ENCODE measurements at regions of chr19 and their contacts with region 1.

Region 1: DNA sequence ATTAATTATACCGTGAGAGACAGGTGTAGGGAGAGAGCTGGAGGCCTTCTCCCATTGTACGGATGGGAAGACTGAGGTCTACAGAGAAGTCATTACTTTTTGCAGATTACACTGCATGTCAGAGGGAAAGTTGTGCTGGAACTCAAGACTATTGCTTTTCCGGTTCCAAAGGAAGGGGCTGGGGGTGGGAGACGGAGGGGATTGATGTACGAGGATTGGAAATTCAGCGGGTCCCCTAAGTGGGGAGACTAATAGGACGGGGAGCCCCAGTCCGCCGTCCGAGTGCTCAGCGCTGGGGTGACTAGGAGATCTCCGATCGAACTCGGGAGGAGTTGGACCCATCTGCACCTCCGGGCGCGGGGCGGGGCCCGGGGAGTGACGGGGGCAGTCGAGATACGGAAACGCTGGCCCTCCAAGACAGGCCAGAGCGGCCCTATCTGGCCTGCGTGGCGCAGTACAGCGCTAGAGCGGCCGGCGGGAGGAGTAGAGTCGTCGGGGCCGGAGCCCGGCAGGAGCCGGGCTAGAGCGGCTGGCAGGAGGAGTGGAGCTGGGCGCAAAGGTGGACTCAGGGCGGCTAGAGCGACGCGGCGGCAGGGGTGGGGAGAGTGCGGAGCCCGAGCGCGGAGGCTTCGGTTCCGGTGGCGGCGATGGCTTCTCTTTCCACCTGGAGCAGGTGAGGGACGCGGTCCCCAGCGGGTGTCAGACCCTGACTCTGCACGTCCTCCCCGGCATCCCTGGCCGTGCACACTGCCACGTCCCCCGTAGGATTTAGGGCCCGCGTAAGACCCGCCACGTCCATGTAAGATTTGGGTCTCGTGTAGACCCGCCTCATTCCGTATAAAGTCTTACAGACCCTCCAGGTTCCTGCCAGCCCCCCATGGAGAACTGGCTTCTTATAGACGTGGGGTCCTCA is 1.1 kb downstream of the ARHGEF1 start:
- DNase-seq: peak; percentile 93 to 98 (median 96)
- ATAC-seq: peak; percentile 97 to 99 (median 98)
- H3K4me3 ChIP-seq: peak overlapping the region; percentile 45 to 99 (median 92)
- H3K27ac ChIP-seq: peak overlapping the region; percentile 83 to 98 (median 93)
- H3K4me1 ChIP-seq: peaks cover 0 to 51% (median 32%) of the 10 kb centered on the region in 12 donors
- H3K27me3 ChIP-seq: no peaks in the 10 kb centered on the region
- CTCF ChIP-seq: peak in 4 of 12 donors; percentile 13 to 43 (median 38)
- POLR2A ChIP-seq: peak in 1 of 2 donors; percentile 63

Region 2: GRCh38 chr19:41859618-41860418 is 24.3 kb before region 1 on chr19 and contains the start of gene RPS19:
- intact Hi-C with region 1: loop called in 2 of 10 experiments (anchors 1 kb)
- DNase-seq: peak; percentile 98 to 99 (median 99)
- ATAC-seq: peak; percentile 95 to 97 (median 96)
- H3K4me3 ChIP-seq: peak within 1 kb of the TSS; percentile 74 to 94 (median 86)
- H3K27ac ChIP-seq: peak within 1 kb of the TSS; percentile 91 to 99 (median 97)
- H3K4me1 ChIP-seq: peaks cover 6 to 43% (median 30%) of the 10 kb centered on the region in 12 donors
- H3K27me3 ChIP-seq: no peaks in the 10 kb centered on the region
- CTCF ChIP-seq: peak; percentile 44 to 81 (median 66)
- POLR2A ChIP-seq: peak; percentile 31 to 78
- total RNA-seq, gene RPS19: 161 to 1,072 (median 585) TPM

Region 3: DNA sequence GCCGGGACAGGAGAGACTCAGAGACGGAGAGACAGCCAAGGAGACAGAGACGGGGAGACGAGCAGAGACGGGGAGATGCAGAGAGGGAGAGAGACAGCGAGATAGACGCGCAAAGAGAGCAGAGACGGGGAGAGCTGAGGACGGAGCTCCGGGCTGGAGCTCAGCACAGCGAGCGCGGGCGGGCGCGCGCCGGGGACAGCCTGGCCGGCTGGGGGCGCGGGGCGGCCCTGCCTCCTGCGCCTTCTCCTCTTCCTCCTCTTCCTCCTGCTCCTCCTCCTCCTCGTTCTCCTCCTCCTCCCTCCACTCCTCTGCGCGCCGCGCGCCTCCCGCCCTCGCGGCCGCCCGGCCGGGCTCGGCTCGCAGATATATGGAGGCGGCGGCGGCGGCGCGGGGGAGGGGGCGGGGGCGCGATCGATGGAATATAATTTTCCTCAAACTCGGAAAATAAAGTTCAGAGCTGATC is 44.2 kb after region 1 on chr19 and contains the start of gene ERFL:
- intact Hi-C with region 1: loop called in 6 of 10 experiments (anchors 1 to 5 kb)
- DNase-seq: no peak
- ATAC-seq: peak in 1 of 4 donors; percentile 14
- H3K4me3 ChIP-seq: peak within 1 kb of the TSS; percentile 18 to 57 (median 46)
- H3K27ac ChIP-seq: no peak within 1 kb of the TSS
- H3K4me1 ChIP-seq: peaks cover 0 to 23% (median 15%) of the 10 kb centered on the region in 12 donors
- H3K27me3 ChIP-seq: peaks cover 61 to 97% (median 93%) of the 10 kb centered on the region in 9 donors
- CTCF ChIP-seq: peak in 1 of 12 donors; percentile 3
- POLR2A ChIP-seq: no peak
- total RNA-seq, gene ERFL: 0.13 TPM in 1 of 9 donors, not detected in the others

Region 4: DNA sequence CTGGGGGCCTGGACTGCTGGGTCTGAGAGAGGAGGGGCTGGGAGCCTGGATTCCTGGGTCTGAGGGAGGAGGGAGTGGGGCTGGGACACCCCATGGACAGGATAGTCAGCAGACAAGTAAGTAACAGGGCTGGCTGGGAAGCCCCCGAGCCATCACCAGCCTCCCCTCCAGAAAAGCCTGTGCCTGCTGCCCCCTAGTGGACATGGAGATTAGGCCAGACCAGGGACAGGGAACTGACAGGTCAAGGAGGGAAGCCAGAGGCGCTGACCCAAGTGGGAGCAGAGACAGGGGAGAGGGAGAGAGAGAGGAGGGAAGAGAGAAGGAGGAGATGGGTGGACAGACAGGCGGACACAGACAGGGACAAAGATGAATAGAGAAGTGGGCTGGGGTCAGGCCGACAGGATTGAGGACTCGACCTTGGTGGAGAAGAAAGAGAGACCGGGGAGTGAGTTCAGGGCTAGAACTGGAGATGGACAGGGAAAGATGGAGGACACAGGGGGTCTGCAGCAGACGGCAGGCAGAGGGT is 50.8 kb after region 1 on chr19:
- intact Hi-C with region 1: loop called in 4 of 10 experiments (anchors 5 kb)
- DNase-seq: peak; percentile 58 to 78 (median 70)
- ATAC-seq: peak in 3 of 4 donors; percentile 62 to 75 (median 74)
- H3K4me3 ChIP-seq: no peak overlapping the region
- H3K27ac ChIP-seq: no peak overlapping the region
- H3K4me1 ChIP-seq: peaks cover 0 to 6% (median 0%) of the 10 kb centered on the region in 12 donors
- H3K27me3 ChIP-seq: peaks cover 25 to 77% (median 55%) of the 10 kb centered on the region in 9 donors
- CTCF ChIP-seq: peak; percentile 66 to 85 (median 79)
- POLR2A ChIP-seq: no peak

Region 5: DNA sequence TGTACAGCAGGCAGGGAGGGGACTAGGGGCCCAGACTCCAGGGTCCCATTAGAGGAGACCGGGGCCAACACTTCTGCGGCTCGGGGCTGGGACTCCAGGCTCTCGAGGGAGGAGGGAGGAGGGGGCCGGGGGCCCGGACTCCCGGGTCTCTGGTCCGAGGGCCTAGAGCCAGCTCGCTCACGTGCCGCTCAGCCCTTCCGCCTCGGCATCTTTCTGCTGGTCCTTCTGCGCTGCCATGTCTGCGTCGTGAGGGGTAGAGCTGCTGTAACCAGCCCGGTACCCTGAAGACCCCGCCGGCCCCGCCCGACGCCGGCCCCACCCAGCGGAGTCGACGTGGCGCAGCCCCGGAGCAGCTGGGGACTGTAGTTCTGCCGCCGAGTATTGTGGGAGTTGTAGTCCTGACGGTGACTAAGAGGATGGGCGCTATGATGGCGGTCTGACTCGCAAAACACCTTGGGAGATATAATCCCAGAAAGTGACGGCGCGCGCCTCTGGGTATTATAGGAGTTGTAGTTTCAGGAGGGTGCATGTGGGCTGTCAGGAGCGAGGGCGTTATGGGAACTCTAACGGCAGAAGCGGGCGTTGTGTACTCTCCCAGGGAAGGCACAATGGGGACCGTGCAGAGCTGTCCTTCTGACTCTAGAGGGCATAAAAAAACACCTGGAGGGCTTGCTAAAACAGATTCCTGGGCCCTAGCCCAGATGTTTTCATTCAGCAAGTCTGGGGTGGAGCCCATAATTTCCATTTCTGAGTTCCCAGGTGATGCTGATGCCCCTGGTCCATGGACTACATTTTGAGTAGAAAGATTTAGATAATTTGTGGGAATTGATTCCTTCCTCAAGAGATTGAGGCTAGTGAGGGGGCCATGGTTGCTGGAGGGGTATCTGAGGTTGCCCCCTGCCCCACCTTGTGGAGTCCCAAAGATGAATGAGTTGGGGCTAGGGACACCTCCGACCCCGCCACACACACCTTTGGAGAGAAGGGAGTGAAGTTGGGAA is 75.3 kb after region 1 on chr19 and contains the start of gene RABAC1:
- intact Hi-C with region 1: loop called in 2 of 10 experiments (anchors 5 kb)
- DNase-seq: peak; percentile 90 to 93 (median 92)
- ATAC-seq: peak; percentile 88 to 93 (median 91)
- H3K4me3 ChIP-seq: peak within 1 kb of the TSS; percentile 74 to 99 (median 95)
- H3K27ac ChIP-seq: peak within 1 kb of the TSS; percentile 60 to 94 (median 88)
- H3K4me1 ChIP-seq: peaks cover 3 to 28% (median 17%) of the 10 kb centered on the region in 12 donors
- H3K27me3 ChIP-seq: no peaks in the 10 kb centered on the region
- CTCF ChIP-seq: peak in 4 of 12 donors; percentile 7 to 17 (median 14)
- POLR2A ChIP-seq: peak in 1 of 2 donors; percentile 45
- total RNA-seq, gene RABAC1: 43.2 to 128 (median 67.2) TPM

Region 6: DNA sequence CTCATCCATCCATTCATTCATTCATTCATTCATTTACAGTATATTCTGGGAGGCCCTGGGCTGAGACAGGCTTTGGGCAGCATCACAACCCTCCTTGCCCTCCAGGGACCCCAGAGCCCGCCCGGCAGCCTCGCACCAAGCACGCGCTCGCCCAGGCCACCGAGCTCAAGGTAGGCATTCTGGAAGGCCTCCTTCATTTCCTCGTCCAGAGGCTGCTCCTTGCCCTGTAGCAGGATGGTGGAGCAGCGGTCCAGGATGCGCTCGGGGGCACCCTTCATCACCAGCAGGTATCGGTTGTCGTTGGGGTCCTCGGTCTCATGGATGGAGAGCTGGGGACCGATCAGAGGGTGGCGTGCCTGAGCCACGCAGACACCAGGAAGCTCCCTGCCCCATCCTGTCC is 94.4 kb after region 1 on chr19:
- intact Hi-C with region 1: no loop called
- DNase-seq: no peak
- ATAC-seq: no peak
- H3K4me3 ChIP-seq: no peak overlapping the region
- H3K27ac ChIP-seq: peak overlapping the region in 2 of 12 donors; percentile 67 to 80
- H3K4me1 ChIP-seq: peaks cover 0 to 12% (median 0%) of the 10 kb centered on the region in 12 donors
- H3K27me3 ChIP-seq: no peaks in the 10 kb centered on the region
- CTCF ChIP-seq: no peak
- POLR2A ChIP-seq: no peak

Region 7: GRCh38 chr19:42075616-42076379 is 191.7 kb after region 1 on chr19 and contains the start of gene ZNF574:
- intact Hi-C with region 1: loop called in 1 of 10 experiments (anchors 5 kb)
- DNase-seq: peak; percentile 98 to 99 (median 99)
- ATAC-seq: peak; percentile 98 to 100 (median 99)
- H3K4me3 ChIP-seq: peak within 1 kb of the TSS; percentile 62 to 96 (median 86)
- H3K27ac ChIP-seq: peak within 1 kb of the TSS; percentile 89 to 99 (median 94)
- H3K4me1 ChIP-seq: peaks cover 0 to 26% (median 17%) of the 10 kb centered on the region in 12 donors
- H3K27me3 ChIP-seq: no peaks in the 10 kb centered on the region
- CTCF ChIP-seq: no peak
- POLR2A ChIP-seq: peak in 1 of 2 donors; percentile 74
- total RNA-seq, gene ZNF574: 6.3 to 17.7 (median 8.8) TPM

Measured in heart left ventricle (tissue), 16 donors.